Gastrocnemius medialis (tissue), 4 donors: ENCODE measurements at regions of chr18 and their contacts with region 1.

Region 1: GRCh38 chr18:50819728-50820378 is at the start of gene MRO:
- DNase-seq: peak; percentile 75 to 83
- ATAC-seq: peak; percentile 82 to 88
- H3K4me3 ChIP-seq: peak within 1 kb of the TSS; percentile 42 to 51 (median 50)
- H3K27ac ChIP-seq: peak within 1 kb of the TSS; percentile 53 to 69 (median 64)
- H3K4me1 ChIP-seq: peaks cover 22 to 25% of the 10 kb centered on the region in 2 donors
- H3K27me3 ChIP-seq: no peaks in the 10 kb centered on the region
- CTCF ChIP-seq: peak; percentile 77 to 93 (median 91)
- POLR2A ChIP-seq: no peak
- total RNA-seq, gene MRO: 0.18 to 1.4 (median 0.49) TPM in 3 of 4 donors, not detected in the other

Region 2: DNA sequence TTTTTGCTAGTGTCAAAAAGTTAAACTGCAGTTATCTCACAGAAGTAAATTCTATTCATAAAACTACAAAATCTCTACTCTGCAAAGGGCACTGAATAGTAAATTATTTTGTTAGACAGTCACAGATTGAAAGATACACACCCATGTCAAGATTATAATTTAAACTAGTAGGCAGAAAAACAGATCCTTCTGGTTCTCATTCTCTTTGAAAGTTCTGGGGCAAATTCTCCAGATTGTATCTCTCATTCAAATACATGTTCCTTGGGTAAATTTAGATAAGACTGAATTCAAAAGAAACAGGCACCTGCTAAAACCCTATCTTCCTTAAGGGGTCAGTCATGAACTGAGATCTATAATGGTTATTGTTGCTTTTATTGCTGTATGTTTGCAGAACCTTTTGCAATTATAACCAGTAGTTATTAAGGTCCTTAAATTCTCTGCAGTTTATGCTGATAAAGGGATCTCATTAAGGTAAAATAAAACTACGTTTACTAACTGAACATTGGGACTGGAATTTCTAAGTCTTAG is 708.5 kb before region 1 on chr18:
- in situ Hi-C with region 1: no loop called
- intact Hi-C with region 1: no loop called
- DNase-seq: no peak
- ATAC-seq: no peak
- H3K4me3 ChIP-seq: no peak overlapping the region
- H3K27ac ChIP-seq: no peak overlapping the region
- H3K4me1 ChIP-seq: no peaks in the 10 kb centered on the region
- H3K27me3 ChIP-seq: no peaks in the 10 kb centered on the region
- CTCF ChIP-seq: no peak
- POLR2A ChIP-seq: no peak

Region 3: DNA sequence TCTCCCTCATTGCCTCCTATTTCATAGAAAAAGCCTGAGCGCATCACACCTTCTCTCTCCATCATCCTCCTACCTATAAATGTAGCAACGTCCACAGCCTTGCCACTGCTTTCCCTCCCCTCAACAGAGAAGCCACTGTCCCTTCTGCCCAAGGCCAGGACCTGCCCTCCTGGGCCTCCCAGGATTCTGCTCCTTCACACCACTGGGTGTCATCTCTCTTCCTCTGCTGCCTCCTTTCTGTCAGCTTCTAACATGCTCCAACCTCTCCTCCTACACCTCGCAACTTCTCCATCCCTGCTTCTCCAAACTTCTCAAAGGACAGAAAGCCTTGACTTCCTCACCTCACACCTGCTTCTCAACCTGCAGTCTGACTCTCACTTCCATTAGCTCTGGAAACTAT is 37.8 kb after region 1 on chr18:
- in situ Hi-C with region 1: no loop called
- intact Hi-C with region 1: loop called (anchors 1 kb)
- DNase-seq: no peak
- ATAC-seq: peak in 1 of 2 donors; percentile 30
- H3K4me3 ChIP-seq: no peak overlapping the region
- H3K27ac ChIP-seq: peak overlapping the region; percentile 79 to 89 (median 86)
- H3K4me1 ChIP-seq: peaks cover 26 to 32% of the 10 kb centered on the region in 2 donors
- H3K27me3 ChIP-seq: no peaks in the 10 kb centered on the region
- CTCF ChIP-seq: peak in 1 of 5 experiments; percentile 19
- POLR2A ChIP-seq: no peak

Region 4: DNA sequence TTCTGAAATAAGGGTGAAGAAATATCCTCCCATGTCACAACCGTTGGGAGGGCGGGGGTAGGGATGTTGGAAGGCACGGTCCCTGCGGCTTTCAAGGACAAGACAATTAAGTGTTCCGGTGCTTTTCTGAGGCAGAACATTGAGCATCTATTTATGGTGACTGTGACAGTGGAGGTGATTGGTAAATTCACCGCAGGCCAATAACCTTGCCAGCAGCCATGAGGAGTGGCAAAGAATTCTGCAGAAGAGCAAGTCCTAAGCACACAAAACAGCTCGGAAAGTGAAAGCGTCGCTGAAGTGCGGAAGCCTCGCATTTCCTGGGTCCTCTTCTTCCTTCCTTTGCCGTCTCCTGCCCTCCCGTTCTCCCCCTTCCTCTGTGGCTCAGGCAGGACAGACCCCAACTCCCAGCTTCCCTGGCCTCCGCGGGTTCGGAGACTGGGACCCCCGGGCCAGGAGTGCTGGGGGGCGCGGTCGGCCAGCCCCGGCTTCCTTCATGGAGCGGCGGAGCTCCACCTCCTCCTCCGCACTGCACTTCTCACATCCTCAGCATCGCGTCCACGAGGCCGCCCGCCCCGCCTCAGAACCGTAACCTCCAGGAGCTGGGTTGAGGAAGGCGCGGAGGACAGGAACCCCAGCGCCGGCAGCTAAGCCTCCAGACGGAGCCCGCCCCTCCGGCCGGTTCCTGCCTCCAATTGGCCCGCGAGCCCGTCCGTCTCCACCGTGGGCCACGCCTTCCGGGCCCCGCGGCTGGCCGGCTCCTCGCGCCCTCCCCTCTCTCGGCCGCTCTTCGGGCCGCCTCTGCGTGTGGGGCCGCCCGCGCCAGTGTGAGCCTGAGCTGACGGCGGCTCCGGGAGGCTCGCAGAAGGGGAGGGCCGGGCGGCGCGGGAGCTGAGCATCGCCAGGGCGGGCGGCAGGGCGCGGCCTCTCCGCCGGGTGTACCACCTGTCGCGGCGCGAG is 58.8 kb after region 1 on chr18 and contains the start of gene ME2:
- in situ Hi-C with region 1: loop called in 1 of 4 experiments (anchors 5 kb)
- intact Hi-C with region 1: loop called (anchors 1 kb)
- DNase-seq: peak; percentile 83 to 88
- ATAC-seq: peak; percentile 87 to 91
- H3K4me3 ChIP-seq: peak within 1 kb of the TSS; percentile 80 to 96 (median 89)
- H3K27ac ChIP-seq: peak within 1 kb of the TSS; percentile 88 to 97 (median 94)
- H3K4me1 ChIP-seq: peaks cover 10 to 17% of the 10 kb centered on the region in 2 donors
- H3K27me3 ChIP-seq: no peaks in the 10 kb centered on the region
- CTCF ChIP-seq: peak in 1 of 5 experiments; percentile 5
- POLR2A ChIP-seq: peak; percentile 94 to 98
- total RNA-seq, gene ME2: 25.3 to 50.6 (median 46.5) TPM

Region 5: GRCh38 chr18:51006061-51006818 is 186.4 kb after region 1 on chr18:
- in situ Hi-C with region 1: no loop called
- intact Hi-C with region 1: loop called (anchors 1 kb)
- DNase-seq: no peak
- ATAC-seq: peak; percentile 79 to 86
- H3K4me3 ChIP-seq: no peak overlapping the region
- H3K27ac ChIP-seq: peak overlapping the region in 3 of 4 donors; percentile 27 to 50 (median 47)
- H3K4me1 ChIP-seq: peaks cover 0 to 3% of the 10 kb centered on the region in 2 donors
- H3K27me3 ChIP-seq: no peaks in the 10 kb centered on the region
- CTCF ChIP-seq: peak in 3 of 5 experiments; percentile 10 to 21 (median 17)
- POLR2A ChIP-seq: no peak

Region 6: GRCh38 chr18:51051105-51051712 is 231.4 kb after region 1 on chr18:
- in situ Hi-C with region 1: loop called in 2 of 4 experiments (anchors 5 to 10 kb)
- intact Hi-C with region 1: loop called (anchors 2 kb)
- DNase-seq: no peak
- ATAC-seq: peak; percentile 81 to 88
- H3K4me3 ChIP-seq: no peak overlapping the region
- H3K27ac ChIP-seq: no peak overlapping the region
- H3K4me1 ChIP-seq: peaks cover 0 to 11% of the 10 kb centered on the region in 2 donors
- H3K27me3 ChIP-seq: no peaks in the 10 kb centered on the region
- CTCF ChIP-seq: peak; percentile 62 to 81 (median 70)
- POLR2A ChIP-seq: no peak